Naive thymus-derived CD8-positive, alpha-beta T cell (primary cell): ENCODE measurements at regions of chr18 and their contacts with region 1.

Region 1: GRCh38 chr18:79507076-79507545 is 111.4 kb downstream of the NFATC1 start:
- DNase-seq: peak in 6 of 10 donors; percentile 11 to 61 (median 42)
- ATAC-seq: peak; percentile 69 to 70
- H3K4me3 Mint-ChIP-seq: peak overlapping the region; percentile 66 to 87 (median 77)
- H3K27ac Mint-ChIP-seq: peak overlapping the region; percentile 85 to 96 (median 92)
- H3K4me1 Mint-ChIP-seq: peaks cover 25 to 61% (median 52%) of the 10 kb centered on the region in 4 donors
- H3K27me3 Mint-ChIP-seq: no peaks in the 10 kb centered on the region

Region 2: GRCh38 chr18:79317718-79318117 is 189.4 kb before region 1 on chr18:
- POLR2A ChIA-PET with region 1: no interaction called
- DNase-seq: no peak
- ATAC-seq: no peak
- H3K4me3 Mint-ChIP-seq: peak overlapping the region in 4 of 10 donors; percentile 31 to 58 (median 42)
- H3K27ac Mint-ChIP-seq: peak overlapping the region; percentile 55 to 92 (median 74)
- H3K4me1 Mint-ChIP-seq: peaks cover 11 to 32% (median 28%) of the 10 kb centered on the region in 4 donors
- H3K27me3 Mint-ChIP-seq: no peaks in the 10 kb centered on the region

Region 3: GRCh38 chr18:79517341-79517740 is 10.2 kb after region 1 on chr18:
- POLR2A ChIA-PET with region 1: interaction called, 19 read pairs
- DNase-seq: peak in 3 of 10 donors; percentile 25 to 38 (median 29)
- ATAC-seq: peak; percentile 11 to 20
- H3K4me3 Mint-ChIP-seq: peak overlapping the region; percentile 58 to 89 (median 80)
- H3K27ac Mint-ChIP-seq: peak overlapping the region; percentile 95 to 99 (median 98)
- H3K4me1 Mint-ChIP-seq: peaks cover 37 to 66% (median 61%) of the 10 kb centered on the region in 4 donors
- H3K27me3 Mint-ChIP-seq: no peaks in the 10 kb centered on the region